Heart left ventricle (tissue), 16 donors: ENCODE measurements at regions of chr1 and their contacts with region 1.

Region 1: GRCh38 chr1:213374369-213374768 is 323.3 kb downstream of the RPS6KC1 start:
- DNase-seq: peak in 4 of 5 donors; percentile 28 to 55 (median 44)
- ATAC-seq: peak in 3 of 4 donors; percentile 58 to 72 (median 69)
- H3K4me3 ChIP-seq: no peak overlapping the region
- H3K27ac ChIP-seq: no peak overlapping the region
- H3K4me1 ChIP-seq: no peaks in the 10 kb centered on the region
- H3K27me3 ChIP-seq: no peaks in the 10 kb centered on the region
- CTCF ChIP-seq: peak; percentile 67 to 89 (median 82)
- POLR2A ChIP-seq: no peak

Region 2: DNA sequence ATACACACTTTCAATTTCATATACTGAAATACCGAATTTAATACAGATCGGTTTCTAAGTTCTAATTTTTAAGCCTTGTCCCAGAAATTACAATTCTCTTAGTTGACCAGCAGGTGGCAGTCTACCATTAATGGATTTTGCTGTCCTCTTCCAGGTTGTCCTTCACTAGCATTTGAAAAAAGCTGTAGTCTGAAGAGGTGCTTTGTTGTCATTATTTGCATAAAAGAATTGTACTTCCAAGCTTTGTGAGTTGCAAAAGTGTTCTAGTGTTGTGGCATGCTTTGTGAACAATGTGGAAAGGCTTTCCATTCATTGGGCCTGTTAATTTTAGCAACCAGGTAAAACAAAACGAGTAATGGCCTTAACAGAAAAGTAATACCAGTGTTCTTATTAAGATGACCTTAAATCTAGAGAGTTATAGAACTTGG is 129.7 kb before region 1 on chr1:
- intact Hi-C with region 1: loop called in 1 of 10 experiments (anchors 10 kb)
- DNase-seq: peak in 1 of 5 donors; percentile 29
- ATAC-seq: no peak
- H3K4me3 ChIP-seq: no peak overlapping the region
- H3K27ac ChIP-seq: no peak overlapping the region
- H3K4me1 ChIP-seq: no peaks in the 10 kb centered on the region
- H3K27me3 ChIP-seq: no peaks in the 10 kb centered on the region
- CTCF ChIP-seq: peak; percentile 71 to 88 (median 79)
- POLR2A ChIP-seq: no peak

Region 3: GRCh38 chr1:213419369-213420030 is 45.1 kb after region 1 on chr1:
- intact Hi-C with region 1: loop called in 1 of 10 experiments (anchors 10 kb)
- DNase-seq: no peak
- ATAC-seq: no peak
- H3K4me3 ChIP-seq: no peak overlapping the region
- H3K27ac ChIP-seq: no peak overlapping the region
- H3K4me1 ChIP-seq: peaks cover 0 to 6% (median 0%) of the 10 kb centered on the region in 12 donors
- H3K27me3 ChIP-seq: no peaks in the 10 kb centered on the region
- CTCF ChIP-seq: no peak
- POLR2A ChIP-seq: no peak

Region 4: GRCh38 chr1:213549982-213550381 is 175.6 kb after region 1 on chr1:
- intact Hi-C with region 1: loop called in 1 of 10 experiments (anchors 10 kb)
- DNase-seq: no peak
- ATAC-seq: peak in 3 of 4 donors; percentile 65 to 81 (median 70)
- H3K4me3 ChIP-seq: no peak overlapping the region
- H3K27ac ChIP-seq: no peak overlapping the region
- H3K4me1 ChIP-seq: no peaks in the 10 kb centered on the region
- H3K27me3 ChIP-seq: no peaks in the 10 kb centered on the region
- CTCF ChIP-seq: no peak
- POLR2A ChIP-seq: no peak

Region 5: GRCh38 chr1:213564215-213564659 is 189.9 kb after region 1 on chr1:
- intact Hi-C with region 1: loop called in 2 of 10 experiments (anchors 10 kb)
- DNase-seq: no peak
- ATAC-seq: peak in 1 of 4 donors; percentile 49
- H3K4me3 ChIP-seq: no peak overlapping the region
- H3K27ac ChIP-seq: no peak overlapping the region
- H3K4me1 ChIP-seq: no peaks in the 10 kb centered on the region
- H3K27me3 ChIP-seq: no peaks in the 10 kb centered on the region
- CTCF ChIP-seq: peak; percentile 13 to 50 (median 34)
- POLR2A ChIP-seq: no peak